Endothelial cell of umbilical vein (primary cell): ENCODE measurements at regions of chr22 and their contacts with region 1.

Region 1: DNA sequence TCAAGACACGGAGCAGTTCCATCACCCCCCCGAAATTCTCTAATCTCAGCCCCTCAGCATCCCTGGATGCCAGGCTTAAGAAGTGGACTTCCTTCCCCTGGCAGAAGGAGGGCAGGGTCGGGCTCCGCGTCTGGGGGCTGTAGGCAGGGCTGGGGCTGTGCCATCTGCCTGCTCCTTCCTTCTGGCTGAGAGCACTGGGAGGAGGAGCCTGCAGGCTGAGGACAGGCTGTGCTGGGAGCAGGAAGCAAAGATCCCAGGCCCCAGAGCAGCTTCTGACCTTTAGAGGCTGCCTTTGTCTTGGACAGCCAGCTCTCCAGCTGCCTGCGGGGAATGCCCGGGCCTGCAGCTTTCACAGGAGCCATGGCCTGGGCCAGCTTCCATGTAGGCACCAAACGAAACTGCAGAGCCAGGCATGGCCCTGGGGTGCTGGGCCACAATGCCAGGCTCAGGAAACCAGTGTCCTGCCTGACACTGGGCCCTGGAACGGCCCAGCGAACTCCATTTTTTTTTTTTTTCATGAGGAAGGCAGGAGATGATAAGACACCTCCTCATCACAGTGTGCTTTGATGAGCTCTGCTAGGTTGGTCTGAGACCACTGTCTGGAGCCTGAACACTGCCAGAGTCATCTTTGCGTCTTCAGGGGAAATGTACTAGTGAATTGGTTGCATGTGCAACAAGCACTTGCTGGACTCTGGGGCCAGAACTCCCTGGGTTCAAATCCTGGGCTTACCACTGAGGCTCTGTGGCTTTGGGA is 67.9 kb downstream of the MCM5 start:
- DNase-seq: peak; percentile 90
- H3K4me3 ChIP-seq: no peak overlapping the region
- H3K27ac ChIP-seq: peak overlapping the region; percentile 60
- H3K4me1 ChIP-seq: peaks cover 27% of the 10 kb centered on the region
- H3K27me3 ChIP-seq: no peaks in the 10 kb centered on the region
- CTCF ChIP-seq: no peak
- POLR2A ChIP-seq: no peak

Region 2: DNA sequence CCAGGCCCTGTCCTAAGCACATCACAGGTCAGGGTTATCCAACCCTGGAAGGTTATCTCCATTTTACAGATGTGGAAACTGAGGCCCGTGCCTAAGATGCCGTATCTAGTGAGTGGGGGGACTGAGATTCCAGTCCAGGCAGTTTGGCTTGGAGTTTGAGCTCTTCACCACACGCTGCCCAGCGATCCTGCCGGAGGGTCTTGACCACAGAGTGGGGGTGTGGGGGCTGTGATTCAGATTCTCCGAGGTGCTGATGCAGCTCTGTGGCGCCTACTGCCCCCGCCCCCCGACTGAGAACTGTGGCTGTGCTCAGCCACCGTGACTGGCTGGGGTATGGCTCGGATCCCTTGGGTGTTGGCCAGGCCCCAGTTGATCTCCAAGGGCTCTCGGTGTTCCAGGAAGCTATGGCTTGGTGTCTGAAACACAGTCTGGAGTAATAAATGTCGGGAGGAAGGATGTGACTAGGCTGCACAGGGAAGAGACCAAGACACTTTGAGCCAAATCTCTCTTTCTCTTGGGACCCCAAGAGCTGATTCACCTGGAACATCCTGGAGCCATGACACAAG is 12.2 kb after region 1 on chr22:
- CTCF ChIA-PET with region 1: interaction called, 7 read pairs
- POLR2A ChIA-PET with region 1: no interaction called
- dilution Hi-C with region 1: no loop called
- intact Hi-C with region 1: loop called (anchors 2 kb)
- DNase-seq: peak; percentile 22
- H3K4me3 ChIP-seq: no peak overlapping the region
- H3K27ac ChIP-seq: no peak overlapping the region
- H3K4me1 ChIP-seq: peaks cover 19% of the 10 kb centered on the region
- H3K27me3 ChIP-seq: peaks cover 0 to 4% of the 10 kb centered on the region in 2 experiments
- CTCF ChIP-seq: no peak
- POLR2A ChIP-seq: no peak

Region 3: GRCh38 chr22:35539910-35540594 is 72.2 kb after region 1 on chr22:
- CTCF ChIA-PET with region 1: interaction called, 6 read pairs
- POLR2A ChIA-PET with region 1: no interaction called
- dilution Hi-C with region 1: no loop called
- intact Hi-C with region 1: loop called (anchors 5 kb)
- DNase-seq: no peak
- H3K4me3 ChIP-seq: peak overlapping the region in 2 of 3 experiments; percentile 24 to 41
- H3K27ac ChIP-seq: no peak overlapping the region
- H3K4me1 ChIP-seq: peaks cover 14% of the 10 kb centered on the region
- H3K27me3 ChIP-seq: peaks cover 24 to 26% of the 10 kb centered on the region in 2 experiments
- CTCF ChIP-seq: no peak
- POLR2A ChIP-seq: no peak